ENCODE measurements at regions of chr15 and their contacts with region 1.

Region 1: GRCh38 chr15:70825841-70826240 is 28.1 kb downstream of the LARP6 start:
- DNase-seq: no peak
- ATAC-seq: no peak

Region 2: GRCh38 chr15:70701891-70702568 is 123.8 kb before region 1 on chr15:
- intact Hi-C with region 1: no loop called
- DNase-seq: no peak
- ATAC-seq: peak; percentile 71

Region 3: DNA sequence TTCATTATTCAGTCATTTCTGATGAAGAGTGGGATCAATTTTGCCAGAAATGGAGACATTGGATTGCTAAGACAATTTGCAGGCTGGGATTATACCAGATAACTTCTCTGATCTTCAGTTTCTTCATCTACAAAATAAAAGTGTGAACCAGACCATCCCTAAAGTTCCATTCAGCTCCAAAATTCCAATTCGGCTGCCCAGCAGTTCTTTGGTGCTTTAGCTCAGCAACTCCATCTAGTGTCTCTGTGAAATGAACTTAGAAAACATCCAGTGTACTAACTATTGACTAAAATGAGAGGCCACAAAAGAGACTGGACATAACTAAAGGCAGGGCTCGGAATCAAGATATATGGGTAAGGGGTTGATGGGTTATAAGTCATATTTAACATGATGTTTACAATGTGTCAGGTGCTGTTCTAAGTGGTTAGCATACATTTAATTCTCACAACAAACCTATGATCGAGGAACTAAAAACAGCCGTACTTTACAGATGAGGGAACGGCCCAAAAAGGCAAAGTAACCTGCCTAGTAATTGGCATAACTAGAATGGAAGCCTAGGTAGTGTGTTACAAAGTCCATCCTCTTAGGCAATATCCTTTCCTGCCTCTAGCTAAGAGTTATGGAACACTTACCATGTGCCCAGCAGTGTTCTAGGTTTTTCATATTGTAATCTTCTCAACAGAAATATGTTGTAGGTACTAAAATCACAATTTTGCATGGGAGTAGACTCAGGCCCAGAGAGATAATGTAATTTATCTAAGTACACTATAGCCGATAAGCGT is 49.4 kb after region 1 on chr15:
- intact Hi-C with region 1: loop called (anchors 2 kb)
- DNase-seq: no peak
- ATAC-seq: peak; percentile 50

Measured in Right ventricle myocardium inferior (tissue), 1 donor.